Colonic mucosa (tissue), 4 donors: ENCODE measurements at regions of chr5 and their contacts with region 1.

Region 1: DNA sequence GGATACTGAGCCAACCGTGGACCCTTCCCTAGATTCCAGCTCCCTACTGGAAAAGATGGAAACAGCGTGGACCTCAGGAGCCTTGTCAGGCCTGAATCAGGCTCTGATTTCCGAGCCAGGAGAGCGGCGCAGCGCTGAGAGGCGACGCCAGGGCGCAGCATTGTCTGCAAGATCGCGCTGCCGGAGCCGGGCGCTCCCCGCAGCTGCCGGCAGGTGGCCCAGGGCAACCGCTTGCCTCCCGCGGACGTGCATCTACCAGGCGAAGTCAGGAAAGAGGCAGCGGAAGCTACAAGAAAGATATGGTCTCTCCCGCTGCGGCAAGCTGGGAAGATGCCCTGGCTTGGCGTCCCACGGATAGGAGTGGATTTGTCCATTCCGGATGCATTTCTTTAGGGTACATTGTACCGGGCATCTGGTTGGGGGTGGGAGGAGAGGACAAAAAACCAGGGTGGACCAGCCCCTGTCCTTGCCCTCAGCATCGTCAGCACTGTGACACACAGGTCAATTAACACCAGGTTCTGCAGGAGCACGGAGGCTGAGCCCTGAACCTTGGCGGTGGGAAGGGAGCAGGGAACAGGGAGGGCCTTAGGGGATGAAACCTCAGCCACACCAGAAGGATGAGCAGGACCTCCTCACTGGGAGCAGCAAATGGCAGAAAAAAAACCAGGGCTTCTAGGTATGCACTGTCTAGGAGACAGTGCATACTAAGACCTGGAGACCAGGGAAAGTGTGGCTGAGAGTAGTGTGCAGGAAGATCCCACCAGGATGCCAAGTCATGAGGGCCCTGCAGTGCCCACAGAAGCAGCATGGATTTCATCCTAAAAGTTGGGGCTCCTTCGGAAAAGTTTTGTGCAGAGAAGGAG is 55.9 kb downstream of the SFXN1 start:
- DNase-seq: peak; percentile 63
- H3K4me3 ChIP-seq: no peak overlapping the region
- H3K27ac ChIP-seq: no peak overlapping the region
- H3K4me1 ChIP-seq: no peaks in the 10 kb centered on the region
- H3K27me3 ChIP-seq: no peaks in the 10 kb centered on the region
- CTCF ChIP-seq: peak; percentile 95

Region 2: GRCh38 chr5:175418285-175418684 is 116.0 kb before region 1 on chr5:
- intact Hi-C with region 1: no loop called
- DNase-seq: no peak
- H3K4me3 ChIP-seq: no peak overlapping the region
- H3K27ac ChIP-seq: no peak overlapping the region
- H3K4me1 ChIP-seq: no peaks in the 10 kb centered on the region
- H3K27me3 ChIP-seq: no peaks in the 10 kb centered on the region
- CTCF ChIP-seq: no peak

Region 3: DNA sequence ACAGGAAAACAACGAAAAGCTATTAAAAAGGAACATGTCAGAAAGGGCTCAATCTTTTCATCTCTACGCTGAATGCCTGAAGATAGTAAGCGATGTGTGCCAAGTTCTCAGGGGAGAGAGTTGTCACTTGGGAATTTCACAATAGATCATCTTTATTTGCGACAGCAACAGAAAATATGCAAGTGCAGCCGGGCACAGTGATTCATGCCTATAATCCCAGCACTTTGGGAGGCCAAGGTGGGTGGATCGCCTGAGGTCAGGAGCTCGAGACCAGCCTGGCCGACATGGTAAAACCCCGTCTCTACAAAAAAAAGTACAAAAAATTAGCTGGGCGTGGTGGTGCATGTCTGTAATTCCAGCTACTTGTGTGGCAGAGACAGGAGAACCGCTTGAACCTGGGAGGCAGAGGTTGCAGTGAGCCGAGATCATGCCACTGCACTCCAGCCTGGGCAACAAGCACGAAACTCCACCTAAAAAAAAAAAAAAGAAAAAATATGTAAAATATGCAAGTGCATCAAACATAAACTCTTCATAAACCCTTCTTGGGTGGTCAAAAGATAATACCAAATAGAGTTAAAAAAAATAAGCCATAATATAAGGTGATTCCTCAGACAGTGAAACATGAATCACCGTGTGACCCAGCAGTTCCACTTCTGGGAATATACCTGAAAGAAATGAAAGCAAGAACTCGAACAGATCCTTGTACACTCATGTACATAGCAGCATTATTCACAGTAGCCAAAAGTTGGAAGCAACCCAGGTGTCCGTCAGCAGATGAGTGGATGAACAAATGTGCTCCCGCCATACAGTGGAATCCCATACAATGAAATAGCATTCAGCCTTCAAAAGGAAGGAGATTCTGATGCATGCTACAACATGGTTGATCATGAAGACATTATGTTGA is 39.8 kb before region 1 on chr5:
- intact Hi-C with region 1: no loop called
- DNase-seq: no peak
- H3K4me3 ChIP-seq: no peak overlapping the region
- H3K27ac ChIP-seq: no peak overlapping the region
- H3K4me1 ChIP-seq: no peaks in the 10 kb centered on the region
- H3K27me3 ChIP-seq: no peaks in the 10 kb centered on the region
- CTCF ChIP-seq: no peak

Region 4: GRCh38 chr5:175718401-175719108 is 184.3 kb after region 1 on chr5:
- intact Hi-C with region 1: loop called (anchors 5 kb)
- DNase-seq: peak; percentile 49
- H3K4me3 ChIP-seq: no peak overlapping the region
- H3K27ac ChIP-seq: no peak overlapping the region
- H3K4me1 ChIP-seq: no peaks in the 10 kb centered on the region
- H3K27me3 ChIP-seq: no peaks in the 10 kb centered on the region
- CTCF ChIP-seq: peak; percentile 67